PC-9 (cell line): ENCODE measurements at regions of chr2 and their contacts with region 1.

Region 1: GRCh38 chr2:180699657-180700361 is 280.6 kb upstream of the UBE2E3 start:
- DNase-seq: peak in 1 of 2 experiments; percentile 28
- H3K4me3 ChIP-seq: no peak overlapping the region
- H3K27ac ChIP-seq: no peak overlapping the region
- H3K4me1 ChIP-seq: peaks cover under 1% of the 10 kb centered on the region; the same call in 1 of the 2 replicates
- H3K27me3 ChIP-seq: no peaks in the 10 kb centered on the region
- CTCF ChIP-seq: no peak

Region 2: GRCh38 chr2:180675170-180675569 is 24.6 kb before region 1 on chr2:
- CTCF ChIA-PET with region 1: no interaction called
- POLR2A ChIA-PET with region 1: interaction called, 30 read pairs
- intact Hi-C with region 1: no loop called
- DNase-seq: no peak
- H3K4me3 ChIP-seq: no peak overlapping the region
- H3K27ac ChIP-seq: no peak overlapping the region
- H3K4me1 ChIP-seq: peaks cover 37% of the 10 kb centered on the region
- H3K27me3 ChIP-seq: no peaks in the 10 kb centered on the region
- CTCF ChIP-seq: no peak

Region 3: DNA sequence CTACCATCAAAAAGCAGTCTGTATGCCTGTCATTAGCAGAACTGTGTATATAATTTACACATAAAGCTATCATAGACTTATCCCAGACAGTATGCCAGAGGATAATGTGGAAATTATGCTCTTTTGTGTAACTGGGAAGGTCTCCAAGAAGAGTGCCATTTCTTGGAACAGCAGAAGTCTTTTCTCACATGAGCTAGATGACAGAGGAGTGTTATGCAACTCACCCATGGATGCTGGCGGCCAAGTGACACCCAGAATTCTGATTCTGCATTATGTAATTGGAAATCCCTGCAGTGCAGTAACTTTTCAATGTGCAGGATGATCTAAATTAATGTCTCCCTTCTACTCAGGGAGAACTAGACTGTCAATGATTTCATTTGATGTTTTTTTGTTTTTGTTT is 440.6 kb after region 1 on chr2:
- CTCF ChIA-PET with region 1: no interaction called
- POLR2A ChIA-PET with region 1: no interaction called
- intact Hi-C with region 1: no loop called
- DNase-seq: no peak
- H3K4me3 ChIP-seq: no peak overlapping the region
- H3K27ac ChIP-seq: no peak overlapping the region
- H3K4me1 ChIP-seq: peaks cover 24% of the 10 kb centered on the region
- H3K27me3 ChIP-seq: no peaks in the 10 kb centered on the region
- CTCF ChIP-seq: no peak

Region 4: DNA sequence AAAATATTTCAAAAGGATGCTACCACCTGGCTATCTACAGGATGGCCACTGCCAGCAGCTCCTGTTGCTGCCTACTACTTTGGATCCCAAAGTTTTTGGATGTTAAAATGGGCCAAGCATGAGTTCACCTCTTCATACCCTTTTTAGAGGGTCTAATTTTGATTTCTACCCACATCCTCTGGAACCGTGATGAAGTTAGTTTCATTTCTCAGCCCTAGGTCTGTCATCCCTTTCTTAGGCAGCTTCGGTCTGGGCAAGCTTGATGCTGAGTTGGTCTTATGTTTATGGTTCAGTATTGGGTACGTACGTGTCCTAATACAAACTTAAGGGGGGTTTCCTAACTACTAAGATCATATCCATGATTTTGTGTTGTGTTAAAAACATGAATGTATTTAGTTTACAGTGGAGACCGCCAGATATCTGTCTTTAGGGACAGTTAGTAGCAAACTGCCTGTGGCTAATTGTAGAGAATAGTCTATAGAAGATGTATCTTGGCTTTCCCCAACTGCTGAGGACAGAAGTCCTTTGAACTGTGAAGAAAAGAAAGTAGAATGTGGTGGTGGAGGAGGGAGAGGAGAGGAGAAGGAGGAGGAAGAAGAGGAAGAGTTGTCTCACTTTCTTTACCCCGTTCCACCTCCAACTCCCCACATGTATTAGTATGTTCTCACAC is 465.5 kb after region 1 on chr2:
- CTCF ChIA-PET with region 1: no interaction called
- POLR2A ChIA-PET with region 1: no interaction called
- intact Hi-C with region 1: no loop called
- DNase-seq: no peak
- H3K4me3 ChIP-seq: no peak overlapping the region
- H3K27ac ChIP-seq: no peak overlapping the region
- H3K4me1 ChIP-seq: no peaks in the 10 kb centered on the region
- H3K27me3 ChIP-seq: no peaks in the 10 kb centered on the region
- CTCF ChIP-seq: no peak